Lower leg skin (tissue), 4 donors: ENCODE measurements at regions of chr18 and their contacts with region 1.

Region 1: DNA sequence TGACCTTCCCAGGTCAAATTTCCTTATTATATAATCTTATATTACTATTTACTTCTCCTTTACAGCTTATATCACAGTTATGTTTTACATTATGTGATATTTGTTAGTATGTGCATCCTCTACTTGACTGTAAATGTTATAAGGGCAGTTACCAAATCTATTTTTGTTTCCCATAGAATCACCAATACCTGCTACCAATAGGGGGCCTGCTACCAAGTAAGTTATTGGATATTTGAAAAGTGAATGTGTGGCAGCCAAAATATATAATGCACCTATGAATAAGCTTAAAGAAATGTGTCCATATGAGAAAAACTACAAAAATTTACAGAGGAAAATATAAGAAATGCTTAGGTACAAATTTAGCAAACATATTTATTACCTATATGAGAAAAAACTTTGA is 23.9 kb upstream of the CTAGE1 start:
- DNase-seq: no peak
- H3K4me3 ChIP-seq: no peak overlapping the region
- CTCF ChIP-seq: no peak
- POLR2A ChIP-seq: no peak

Region 2: GRCh38 chr18:22385718-22386117 is 55.9 kb before region 1 on chr18:
- intact Hi-C with region 1: no loop called
- DNase-seq: no peak
- H3K4me3 ChIP-seq: no peak overlapping the region
- CTCF ChIP-seq: no peak
- POLR2A ChIP-seq: no peak

Region 3: DNA sequence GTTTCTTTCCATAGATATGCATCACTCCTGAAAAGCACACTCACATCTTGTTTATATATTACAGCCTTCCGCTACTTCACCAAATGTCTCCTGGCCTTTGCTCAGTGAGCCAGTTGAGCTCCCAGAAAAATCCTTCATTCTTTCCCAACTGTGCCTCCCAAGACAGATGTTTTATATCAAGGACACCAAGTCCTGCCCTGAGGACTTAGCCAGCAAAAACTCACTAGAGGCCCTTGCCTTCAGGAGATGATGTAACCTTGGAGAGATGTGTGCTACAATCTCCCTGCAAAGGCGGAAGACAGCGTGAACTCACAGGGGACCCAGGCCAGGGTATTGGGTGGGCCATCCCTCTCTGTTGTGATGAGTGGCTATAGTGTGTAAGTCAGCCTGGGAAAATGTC is 62.2 kb after region 1 on chr18:
- intact Hi-C with region 1: loop called (anchors 10 kb)
- DNase-seq: peak in 1 of 2 donors; percentile 44
- H3K4me3 ChIP-seq: no peak overlapping the region
- CTCF ChIP-seq: no peak
- POLR2A ChIP-seq: no peak